PC-9 (cell line): ENCODE measurements at regions of chr17 and their contacts with region 1.

Region 1: GRCh38 chr17:66865151-66865550 is 30.2 kb downstream of the CACNG5 start:
- DNase-seq: no peak
- H3K4me3 ChIP-seq: no peak overlapping the region
- H3K27ac ChIP-seq: no peak overlapping the region
- H3K4me1 ChIP-seq: no peaks in the 10 kb centered on the region
- H3K27me3 ChIP-seq: peaks cover 26% of the 10 kb centered on the region
- CTCF ChIP-seq: no peak

Region 2: GRCh38 chr17:66673668-66674315 is 191.4 kb before region 1 on chr17:
- CTCF ChIA-PET with region 1: no interaction called
- POLR2A ChIA-PET with region 1: no interaction called
- intact Hi-C with region 1: no loop called
- DNase-seq: peak; percentile 82 to 87
- H3K4me3 ChIP-seq: no peak overlapping the region
- H3K27ac ChIP-seq: peak overlapping the region; percentile 48
- H3K4me1 ChIP-seq: peaks cover 44% of the 10 kb centered on the region
- H3K27me3 ChIP-seq: no peaks in the 10 kb centered on the region
- CTCF ChIP-seq: peak; percentile 87

Region 3: DNA sequence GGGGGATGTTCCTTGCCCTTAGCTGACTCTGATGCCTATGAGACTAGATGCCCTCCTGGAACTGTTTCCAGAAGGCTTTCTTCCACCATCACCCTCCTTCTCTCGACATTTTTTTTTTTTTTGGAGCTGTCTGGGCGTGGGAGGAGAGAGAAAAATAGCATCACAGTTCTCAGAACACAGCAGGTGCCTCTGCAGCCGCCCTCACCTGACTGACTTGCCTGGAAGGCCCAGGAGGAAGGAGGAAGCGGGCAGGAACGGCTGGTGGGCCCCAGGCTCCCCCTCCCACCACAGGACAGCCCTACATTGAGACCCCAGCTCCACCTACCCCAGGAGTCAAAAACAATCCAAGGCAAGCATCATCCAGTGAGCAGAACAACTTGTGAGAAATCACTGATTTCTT is 50.6 kb before region 1 on chr17:
- CTCF ChIA-PET with region 1: no interaction called
- POLR2A ChIA-PET with region 1: no interaction called
- intact Hi-C with region 1: no loop called
- DNase-seq: no peak
- H3K4me3 ChIP-seq: no peak overlapping the region
- H3K27ac ChIP-seq: no peak overlapping the region
- H3K4me1 ChIP-seq: no peaks in the 10 kb centered on the region
- H3K27me3 ChIP-seq: peaks cover 63% of the 10 kb centered on the region
- CTCF ChIP-seq: no peak

Region 4: DNA sequence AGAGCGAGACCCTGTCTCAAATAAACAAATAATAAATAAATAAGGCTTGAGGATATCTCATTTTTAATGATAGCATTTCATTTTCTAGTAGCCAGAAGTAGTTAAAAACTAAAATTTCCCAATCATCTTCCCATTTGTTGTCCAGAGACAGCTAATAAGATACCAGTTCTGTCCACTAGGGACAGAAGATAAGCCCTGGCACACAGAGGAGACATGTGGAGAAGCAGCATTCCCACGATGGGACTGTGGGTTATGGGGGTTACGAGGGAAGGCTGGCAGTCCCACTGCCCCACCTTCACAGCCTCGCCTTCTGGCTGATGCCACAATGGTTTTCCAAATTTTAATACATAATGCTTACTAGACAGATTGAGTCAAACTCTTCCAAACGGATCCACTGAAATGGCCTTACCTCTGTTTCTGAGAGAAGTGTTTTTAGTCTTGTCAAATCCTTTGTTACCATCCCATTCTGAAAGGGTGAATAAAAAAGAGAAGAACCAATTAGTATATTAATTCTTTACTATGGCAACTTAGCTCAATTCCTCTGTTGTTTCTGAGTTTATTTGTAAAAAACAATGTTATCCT is 335.7 kb after region 1 on chr17:
- CTCF ChIA-PET with region 1: no interaction called
- POLR2A ChIA-PET with region 1: interaction called, 11 read pairs
- intact Hi-C with region 1: no loop called
- DNase-seq: no peak
- H3K4me3 ChIP-seq: no peak overlapping the region
- H3K27ac ChIP-seq: no peak overlapping the region
- H3K4me1 ChIP-seq: no peaks in the 10 kb centered on the region
- H3K27me3 ChIP-seq: no peaks in the 10 kb centered on the region
- CTCF ChIP-seq: peak; percentile 74

Region 5: GRCh38 chr17:67246628-67247415 is 381.7 kb after region 1 on chr17:
- CTCF ChIA-PET with region 1: no interaction called
- POLR2A ChIA-PET with region 1: no interaction called
- intact Hi-C with region 1: no loop called
- DNase-seq: peak; percentile 83 to 94
- H3K4me3 ChIP-seq: peak overlapping the region; percentile 99
- H3K27ac ChIP-seq: peak overlapping the region; percentile 65
- H3K4me1 ChIP-seq: peaks cover 27% of the 10 kb centered on the region
- H3K27me3 ChIP-seq: no peaks in the 10 kb centered on the region
- CTCF ChIP-seq: no peak